ENCODE measurements at regions of chr1 and their contacts with region 1.

Region 1: GRCh38 chr1:60281360-60281932 is 207.9 kb upstream of the C1orf87 start:
- DNase-seq: peak; percentile 92
- H3K4me3 ChIP-seq: no peak overlapping the region
- H3K27ac ChIP-seq: peak overlapping the region; percentile 74
- H3K4me1 ChIP-seq: peaks cover 40% of the 10 kb centered on the region
- H3K27me3 ChIP-seq: no peaks in the 10 kb centered on the region
- CTCF ChIP-seq: peak; percentile 92 to 98
- POLR2A ChIP-seq: no peak

Region 2: GRCh38 chr1:59971464-59971911 is 310.0 kb before region 1 on chr1:
- CTCF ChIA-PET with region 1: interaction called, 11 read pairs
- POLR2A ChIA-PET with region 1: no interaction called
- dilution Hi-C with region 1: no loop called
- intact Hi-C with region 1: no loop called
- DNase-seq: peak; percentile 63
- H3K4me3 ChIP-seq: no peak overlapping the region
- H3K27ac ChIP-seq: no peak overlapping the region
- H3K4me1 ChIP-seq: peaks cover 2% of the 10 kb centered on the region
- H3K27me3 ChIP-seq: peaks cover 0 to 11% of the 10 kb centered on the region in 2 experiments
- CTCF ChIP-seq: peak; percentile 83 to 91
- POLR2A ChIP-seq: no peak

Region 3: DNA sequence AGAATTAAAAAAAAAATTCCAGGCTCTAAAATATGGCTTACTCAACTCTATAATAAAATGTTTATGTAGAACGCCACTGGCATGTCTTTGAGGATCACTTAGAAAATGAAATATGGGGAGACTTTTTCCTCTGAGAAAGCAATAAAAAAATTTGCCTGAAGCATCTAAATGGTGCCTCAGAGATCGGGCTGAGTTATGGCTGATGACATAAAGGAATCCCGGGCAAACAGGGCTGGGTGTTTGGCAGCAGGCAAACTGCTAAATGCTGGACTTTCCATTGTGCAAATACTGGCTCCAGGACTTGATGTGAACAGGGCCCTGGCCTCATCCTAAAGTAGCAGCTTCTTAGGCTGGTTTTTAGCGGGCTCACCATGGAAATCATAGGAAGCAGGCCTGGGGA is 163.4 kb before region 1 on chr1:
- CTCF ChIA-PET with region 1: no interaction called
- POLR2A ChIA-PET with region 1: no interaction called
- dilution Hi-C with region 1: no loop called
- intact Hi-C with region 1: no loop called
- DNase-seq: no peak
- H3K4me3 ChIP-seq: no peak overlapping the region
- H3K27ac ChIP-seq: no peak overlapping the region
- H3K4me1 ChIP-seq: no peaks in the 10 kb centered on the region
- H3K27me3 ChIP-seq: no peaks in the 10 kb centered on the region
- CTCF ChIP-seq: no peak
- POLR2A ChIP-seq: no peak

Region 4: GRCh38 chr1:60425528-60425927 is 144.1 kb after region 1 on chr1:
- CTCF ChIA-PET with region 1: interaction called, 25 read pairs
- POLR2A ChIA-PET with region 1: no interaction called
- dilution Hi-C with region 1: no loop called
- intact Hi-C with region 1: loop called (anchors 2 kb)
- DNase-seq: peak; percentile 13
- H3K4me3 ChIP-seq: no peak overlapping the region
- H3K27ac ChIP-seq: no peak overlapping the region
- H3K4me1 ChIP-seq: peaks cover 12% of the 10 kb centered on the region
- H3K27me3 ChIP-seq: no peaks in the 10 kb centered on the region
- CTCF ChIP-seq: peak; percentile 34 to 53
- POLR2A ChIP-seq: no peak

Region 5: DNA sequence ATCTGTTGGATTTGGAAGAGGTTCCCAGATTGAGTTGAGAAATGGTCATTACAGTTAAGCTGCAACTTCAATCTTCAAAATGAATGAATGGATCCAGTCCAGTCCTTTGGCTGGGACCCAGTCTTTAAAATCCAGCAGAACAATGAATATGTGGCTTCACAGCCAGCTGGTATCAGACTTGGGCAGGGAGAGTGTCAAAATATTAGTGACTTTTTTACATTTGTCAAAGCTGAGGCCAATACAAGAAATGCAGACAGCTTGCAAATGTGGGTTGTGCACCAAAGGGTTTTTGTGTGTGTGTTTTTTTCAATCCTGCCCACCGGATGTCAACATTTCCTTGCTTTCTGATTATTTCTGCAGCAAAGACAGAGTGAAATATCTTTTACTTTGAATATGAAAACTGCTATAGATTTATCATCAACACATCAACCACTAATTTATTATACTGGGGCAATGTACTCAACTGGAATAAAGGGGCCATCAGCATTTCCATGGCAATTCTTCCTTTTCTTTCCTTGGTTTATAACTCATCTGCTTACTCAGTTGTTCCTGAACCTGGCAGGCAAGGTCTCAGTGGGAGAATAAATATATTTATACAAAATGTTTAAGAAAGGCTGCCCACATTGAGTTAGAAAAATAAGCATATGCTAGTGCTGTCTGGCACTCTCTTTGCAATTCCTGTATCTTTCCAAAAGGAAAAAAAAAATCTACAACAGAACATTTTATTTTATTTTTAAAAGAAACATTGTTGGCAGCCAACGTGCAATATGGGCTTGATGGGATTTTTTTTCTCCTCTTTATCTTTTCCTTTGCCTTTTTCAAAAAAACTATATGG is 283.7 kb after region 1 on chr1:
- CTCF ChIA-PET with region 1: interaction called, 12 read pairs
- POLR2A ChIA-PET with region 1: no interaction called
- dilution Hi-C with region 1: no loop called
- intact Hi-C with region 1: no loop called
- DNase-seq: peak; percentile 44
- H3K4me3 ChIP-seq: no peak overlapping the region
- H3K27ac ChIP-seq: no peak overlapping the region
- H3K4me1 ChIP-seq: no peaks in the 10 kb centered on the region
- H3K27me3 ChIP-seq: no peaks in the 10 kb centered on the region
- CTCF ChIP-seq: no peak
- POLR2A ChIP-seq: no peak

Region 6: DNA sequence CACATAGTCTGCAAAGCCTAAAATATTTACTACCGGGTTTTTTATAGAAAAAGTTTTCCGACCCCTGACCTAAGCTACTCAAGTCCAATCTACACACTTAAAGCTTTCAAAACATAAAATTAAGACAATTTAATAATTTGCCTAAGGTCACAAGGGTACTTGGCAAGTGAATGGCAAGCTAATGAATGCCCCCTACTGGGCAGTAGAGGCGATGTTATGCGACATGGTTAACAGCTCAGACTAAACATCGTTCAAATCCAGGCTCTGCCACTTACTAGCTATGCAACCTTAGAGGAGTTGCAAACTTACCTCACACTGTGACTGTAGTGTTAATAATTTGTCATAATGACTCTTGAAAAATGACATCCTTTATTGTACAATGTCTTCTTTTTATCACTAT is 483.8 kb after region 1 on chr1:
- CTCF ChIA-PET with region 1: interaction called, 149 read pairs
- POLR2A ChIA-PET with region 1: interaction called, 3 read pairs
- dilution Hi-C with region 1: no loop called
- intact Hi-C with region 1: loop called (anchors 1 kb)
- DNase-seq: peak; percentile 49
- H3K4me3 ChIP-seq: no peak overlapping the region
- H3K27ac ChIP-seq: no peak overlapping the region
- H3K4me1 ChIP-seq: peaks cover 13% of the 10 kb centered on the region
- H3K27me3 ChIP-seq: no peaks in the 10 kb centered on the region
- CTCF ChIP-seq: peak; percentile 44 to 51
- POLR2A ChIP-seq: no peak

Region 7: GRCh38 chr1:60857851-60858250 is 576.4 kb after region 1 on chr1:
- CTCF ChIA-PET with region 1: interaction called, 11 read pairs
- POLR2A ChIA-PET with region 1: no interaction called
- dilution Hi-C with region 1: no loop called
- intact Hi-C with region 1: no loop called
- DNase-seq: no peak
- H3K4me3 ChIP-seq: no peak overlapping the region
- H3K27ac ChIP-seq: no peak overlapping the region
- H3K4me1 ChIP-seq: peaks cover under 1% of the 10 kb centered on the region
- H3K27me3 ChIP-seq: no peaks in the 10 kb centered on the region
- CTCF ChIP-seq: no peak
- POLR2A ChIP-seq: no peak

Region 8: GRCh38 chr1:61337981-61338848 is 1056.8 kb after region 1 on chr1:
- CTCF ChIA-PET with region 1: no interaction called
- POLR2A ChIA-PET with region 1: no interaction called
- dilution Hi-C with region 1: no loop called
- intact Hi-C with region 1: loop called (anchors 10 kb)
- DNase-seq: peak; percentile 93
- H3K4me3 ChIP-seq: peak overlapping the region in 1 of 3 experiments; percentile 49
- H3K27ac ChIP-seq: peak overlapping the region; percentile 93
- H3K4me1 ChIP-seq: peaks cover 27% of the 10 kb centered on the region
- H3K27me3 ChIP-seq: no peaks in the 10 kb centered on the region
- CTCF ChIP-seq: peak; percentile 71 to 77
- POLR2A ChIP-seq: no peak